Endothelial cell of umbilical vein (primary cell): ENCODE measurements at regions of chr9 and their contacts with region 1.

Region 1: DNA sequence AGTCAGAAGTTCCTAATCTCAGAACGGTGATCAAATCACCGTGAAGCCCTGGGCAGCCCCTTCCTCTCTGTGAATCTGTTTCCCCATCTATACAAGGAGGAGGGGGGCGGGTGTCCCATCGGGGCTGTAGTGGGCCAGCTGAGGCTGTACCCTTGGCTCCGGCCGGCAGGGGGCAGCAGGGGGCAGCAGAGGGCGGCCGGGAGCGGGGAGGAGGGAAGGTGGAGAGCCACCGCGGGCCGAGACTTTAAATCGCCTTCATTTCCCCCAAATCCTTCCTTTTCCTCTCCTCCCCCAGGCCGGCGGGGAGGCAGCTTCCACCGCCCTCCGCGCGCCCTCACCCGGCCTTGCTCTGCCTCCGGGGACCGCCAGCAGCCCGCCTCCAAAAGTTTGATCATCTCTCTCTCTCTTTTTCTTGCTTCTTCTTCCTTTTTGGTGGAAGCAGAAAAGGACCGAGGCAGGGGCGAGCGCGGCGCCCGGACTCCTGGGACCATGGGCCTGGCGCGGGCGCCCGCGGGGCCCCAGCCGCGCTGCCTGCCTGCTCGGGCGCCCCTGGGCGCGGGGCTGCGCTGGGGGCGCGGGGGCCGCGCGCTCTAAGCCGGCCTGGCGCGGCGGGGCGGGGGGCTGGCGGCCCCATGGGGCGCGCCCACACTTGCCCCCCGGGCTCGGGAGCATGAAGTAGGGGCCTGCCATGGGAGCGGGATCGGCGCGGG is at the start of gene COL27A1:
- DNase-seq: peak; percentile 81
- H3K4me3 ChIP-seq: peak within 1 kb of the TSS; percentile 41 to 79 (median 68)
- H3K27ac ChIP-seq: peak within 1 kb of the TSS; percentile 36
- H3K4me1 ChIP-seq: peaks cover 25% of the 10 kb centered on the region
- H3K27me3 ChIP-seq: peaks cover 16 to 18% of the 10 kb centered on the region in 2 experiments
- CTCF ChIP-seq: peak; percentile 82 to 97
- POLR2A ChIP-seq: no peak
- total RNA-seq, gene COL27A1: 48.6 and 49.1 TPM in 2 replicates

Region 2: GRCh38 chr9:114174876-114175771 is 19.7 kb after region 1 on chr9:
- CTCF ChIA-PET with region 1: interaction called, 19 read pairs
- POLR2A ChIA-PET with region 1: no interaction called
- dilution Hi-C with region 1: no loop called
- intact Hi-C with region 1: loop called (anchors 2 kb)
- DNase-seq: no peak
- H3K4me3 ChIP-seq: no peak overlapping the region
- H3K27ac ChIP-seq: no peak overlapping the region
- H3K4me1 ChIP-seq: peaks cover 19% of the 10 kb centered on the region
- H3K27me3 ChIP-seq: no peaks in the 10 kb centered on the region
- CTCF ChIP-seq: no peak
- POLR2A ChIP-seq: no peak

Region 3: DNA sequence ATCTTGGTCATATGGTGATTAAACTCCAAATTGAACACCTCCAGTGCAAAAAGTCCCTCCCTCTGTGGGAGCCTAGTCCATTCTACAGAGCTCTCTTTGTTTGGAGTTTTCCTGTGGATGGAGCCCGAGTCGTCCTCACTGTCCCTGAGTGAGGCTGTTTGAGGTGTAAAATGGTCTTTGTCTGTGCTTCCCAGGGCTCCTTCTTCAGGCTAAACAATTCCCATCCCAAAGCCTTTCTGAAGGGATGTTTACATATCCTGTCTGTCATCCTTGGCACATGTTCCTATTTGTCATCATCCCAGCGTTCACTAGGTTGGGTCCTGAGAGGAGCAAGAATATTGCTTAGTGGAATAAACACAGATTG is 68.8 kb after region 1 on chr9:
- CTCF ChIA-PET with region 1: interaction called, 12 read pairs
- POLR2A ChIA-PET with region 1: no interaction called
- dilution Hi-C with region 1: no loop called
- intact Hi-C with region 1: loop called (anchors 2 kb)
- DNase-seq: peak; percentile 51
- H3K4me3 ChIP-seq: no peak overlapping the region
- H3K27ac ChIP-seq: peak overlapping the region; percentile 91
- H3K4me1 ChIP-seq: peaks cover 69% of the 10 kb centered on the region
- H3K27me3 ChIP-seq: no peaks in the 10 kb centered on the region
- CTCF ChIP-seq: no peak
- POLR2A ChIP-seq: peak; percentile 26

Region 4: GRCh38 chr9:114263853-114264510 is 108.6 kb after region 1 on chr9:
- CTCF ChIA-PET with region 1: interaction called, 33 read pairs
- POLR2A ChIA-PET with region 1: no interaction called
- dilution Hi-C with region 1: no loop called
- intact Hi-C with region 1: loop called (anchors 1 kb)
- DNase-seq: no peak
- H3K4me3 ChIP-seq: no peak overlapping the region
- H3K27ac ChIP-seq: no peak overlapping the region
- H3K4me1 ChIP-seq: no peaks in the 10 kb centered on the region
- H3K27me3 ChIP-seq: no peaks in the 10 kb centered on the region
- CTCF ChIP-seq: peak in 1 of 2 donors; percentile 28
- POLR2A ChIP-seq: no peak

Region 5: GRCh38 chr9:114276908-114277821 is 121.7 kb after region 1 on chr9:
- CTCF ChIA-PET with region 1: interaction called, 15 read pairs
- POLR2A ChIA-PET with region 1: no interaction called
- dilution Hi-C with region 1: no loop called
- intact Hi-C with region 1: no loop called
- DNase-seq: peak; percentile 38
- H3K4me3 ChIP-seq: no peak overlapping the region
- H3K27ac ChIP-seq: peak overlapping the region; percentile 42
- H3K4me1 ChIP-seq: peaks cover 2% of the 10 kb centered on the region
- H3K27me3 ChIP-seq: no peaks in the 10 kb centered on the region
- CTCF ChIP-seq: no peak
- POLR2A ChIP-seq: no peak

Region 6: GRCh38 chr9:114304416-114305188 is 149.2 kb after region 1 on chr9:
- CTCF ChIA-PET with region 1: no interaction called
- POLR2A ChIA-PET with region 1: no interaction called
- dilution Hi-C with region 1: no loop called
- intact Hi-C with region 1: loop called (anchors 1 kb)
- DNase-seq: no peak
- H3K4me3 ChIP-seq: no peak overlapping the region
- H3K27ac ChIP-seq: no peak overlapping the region
- H3K4me1 ChIP-seq: no peaks in the 10 kb centered on the region
- H3K27me3 ChIP-seq: no peaks in the 10 kb centered on the region
- CTCF ChIP-seq: no peak
- POLR2A ChIP-seq: no peak